H1 (cell line): ENCODE measurements at regions of chr14 and their contacts with region 1.

Region 1: DNA sequence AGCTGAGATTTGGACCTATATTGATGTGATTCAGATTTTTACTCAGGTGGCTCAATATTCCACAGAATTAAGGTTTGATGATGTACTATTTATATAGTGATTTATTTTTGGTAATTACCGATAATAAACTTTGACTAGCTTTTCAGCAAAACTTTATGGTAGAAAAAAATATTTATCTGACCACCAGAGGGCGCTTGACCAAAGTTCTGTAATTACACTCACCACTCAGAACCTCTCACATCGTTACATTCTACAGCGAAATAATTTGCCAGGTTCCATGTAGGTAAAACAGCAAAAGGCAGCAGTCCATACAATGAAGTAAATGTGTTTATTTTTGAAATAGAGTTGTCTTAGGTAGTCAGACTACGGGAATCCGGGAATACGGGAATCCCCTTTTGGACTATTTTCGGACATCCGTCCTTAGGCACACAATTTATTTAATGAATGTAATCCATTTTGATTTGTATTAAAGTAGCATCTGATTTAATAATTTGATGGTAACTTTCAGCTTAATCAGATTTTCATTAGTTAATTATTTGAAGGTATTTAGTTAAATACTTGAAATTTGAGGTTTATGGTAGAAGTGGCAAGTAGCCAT is 143.0 kb upstream of the DDHD1 start:
- DNase-seq: no peak
- H3K4me3 ChIP-seq: no peak overlapping the region
- H3K27ac ChIP-seq: no peak overlapping the region
- H3K4me1 ChIP-seq: no peaks in the 10 kb centered on the region
- H3K27me3 ChIP-seq: no peaks in the 10 kb centered on the region
- CTCF ChIP-seq: peak in 2 of 3 experiments; percentile 40 to 58; a peak in 2 of 4 replicates
- EP300 ChIP-seq: no peak
- POLR2A ChIP-seq: no peak
- RAD21 ChIP-seq: peak; percentile 38 to 42; a peak in 3 of 4 replicates

Region 2: DNA sequence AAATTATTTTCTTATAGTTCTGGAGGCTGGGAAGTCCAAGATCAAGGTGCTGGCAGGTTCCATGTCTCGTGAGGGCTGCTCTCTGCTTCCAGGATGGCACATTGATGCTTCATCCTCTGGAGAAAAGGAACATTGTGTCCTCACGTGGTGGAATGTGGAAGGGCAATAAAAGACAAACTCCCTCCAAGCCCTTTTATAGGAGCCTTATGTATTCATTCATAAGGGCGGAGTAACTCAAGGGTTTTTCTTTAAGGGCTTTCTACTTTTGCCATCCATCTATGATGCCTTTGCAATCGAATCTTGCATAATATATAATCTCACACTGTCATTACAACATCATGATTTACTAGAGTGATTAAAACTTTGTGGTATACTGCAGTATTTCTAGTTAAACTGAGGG is 10.3 kb before region 1 on chr14:
- CTCF ChIA-PET with region 1: interaction called, 22 read pairs
- POLR2A ChIA-PET with region 1: no interaction called
- DNase-seq: no peak
- H3K4me3 ChIP-seq: no peak overlapping the region
- H3K27ac ChIP-seq: no peak overlapping the region
- H3K4me1 ChIP-seq: no peaks in the 10 kb centered on the region
- H3K27me3 ChIP-seq: no peaks in the 10 kb centered on the region
- CTCF ChIP-seq: no peak
- EP300 ChIP-seq: no peak
- POLR2A ChIP-seq: no peak
- RAD21 ChIP-seq: peak in 1 of 2 experiments; percentile 14; a peak in 1 of 4 replicates

Region 3: GRCh38 chr14:53390018-53390417 is 93.9 kb after region 1 on chr14:
- CTCF ChIA-PET with region 1: no interaction called
- POLR2A ChIA-PET with region 1: no interaction called
- DNase-seq: no peak
- H3K4me3 ChIP-seq: no peak overlapping the region
- H3K27ac ChIP-seq: no peak overlapping the region
- H3K4me1 ChIP-seq: no peaks in the 10 kb centered on the region
- H3K27me3 ChIP-seq: no peaks in the 10 kb centered on the region
- CTCF ChIP-seq: no peak
- EP300 ChIP-seq: no peak
- POLR2A ChIP-seq: no peak
- RAD21 ChIP-seq: no peak